Activated T-helper 1 cell treated with anti-CD3 and anti-CD28 coated beads, Interleukin-12 subunit alpha, Interleukin-12 subunit beta, Interleukin-2, Interleukin-4 antibody, amounts not matched to agents 30 ng/mL and 10 ng/mL and 1 ng/mL, durations not matched to agents 14 hours and 24 hours and 36 hours (primary cell): ENCODE measurements at regions of chrX and their contacts with region 1.

Region 1: GRCh38 chrX:24693453-24694202 is at the start of gene POLA1:
- DNase-seq: peak; percentile 74
- H3K4me3 Mint-ChIP-seq: peak within 1 kb of the TSS; percentile 90
- H3K27ac Mint-ChIP-seq: peak within 1 kb of the TSS; percentile 89
- H3K4me1 Mint-ChIP-seq: peaks cover 28% of the 10 kb centered on the region
- H3K27me3 Mint-ChIP-seq: peaks cover 4% of the 10 kb centered on the region
- total RNA-seq, gene POLA1: 38.2 and 38.3 TPM in 2 replicates

Region 2: GRCh38 chrX:24513416-24513815 is 180.2 kb before region 1 on chrX:
- intact Hi-C with region 1: loop called (anchors 5 kb)
- DNase-seq: peak; percentile 30
- H3K4me3 Mint-ChIP-seq: no peak overlapping the region
- H3K27ac Mint-ChIP-seq: peak overlapping the region; percentile 66
- H3K4me1 Mint-ChIP-seq: peaks cover 24% of the 10 kb centered on the region
- H3K27me3 Mint-ChIP-seq: no peaks in the 10 kb centered on the region

Region 3: DNA sequence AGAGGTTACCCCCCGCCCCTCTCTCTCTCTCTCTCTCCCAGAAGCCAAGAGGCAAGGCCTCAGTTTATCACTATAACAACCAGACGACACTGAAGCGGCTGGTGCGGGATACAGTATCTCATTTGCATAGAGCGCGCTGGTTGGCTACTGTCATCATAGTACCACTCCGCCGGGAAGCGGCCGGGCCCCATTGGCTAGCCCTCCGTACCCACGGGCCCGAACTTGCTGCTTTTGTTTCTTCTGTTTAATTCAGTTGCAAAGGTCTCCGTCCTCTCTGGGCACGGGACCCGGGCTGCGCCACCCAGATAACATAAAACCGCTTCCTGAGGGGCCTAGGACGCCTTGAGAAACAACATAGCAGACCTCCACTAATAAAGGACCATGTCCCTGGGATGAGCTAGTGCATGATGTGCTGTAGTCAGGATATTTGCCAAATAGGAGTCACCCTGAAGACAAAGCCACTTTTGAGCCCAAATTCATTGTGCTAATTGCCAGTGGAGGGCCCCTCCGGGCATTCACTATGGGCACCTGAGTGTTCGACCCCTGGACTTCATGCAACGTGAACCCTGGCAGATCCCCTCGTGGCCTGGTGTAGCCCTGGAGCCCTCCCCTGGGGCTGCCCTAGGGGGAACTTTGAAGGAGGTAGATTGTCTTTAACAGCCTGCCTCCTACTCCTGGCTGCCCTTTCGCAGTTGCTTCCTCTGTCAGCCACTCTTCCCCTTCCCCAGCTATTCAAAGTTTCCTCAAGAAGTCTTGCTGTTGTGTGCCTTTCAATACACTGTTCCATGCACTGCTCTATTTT is 46.2 kb before region 1 on chrX and contains the start of gene PCYT1B:
- intact Hi-C with region 1: loop called (anchors 5 kb)
- DNase-seq: peak; percentile 63
- H3K4me3 Mint-ChIP-seq: peak within 1 kb of the TSS; percentile 69
- H3K27ac Mint-ChIP-seq: no peak within 1 kb of the TSS
- H3K4me1 Mint-ChIP-seq: peaks cover 15% of the 10 kb centered on the region
- H3K27me3 Mint-ChIP-seq: peaks cover 22% of the 10 kb centered on the region
- total RNA-seq, gene PCYT1B: 0.10 TPM in 1 of 2 replicates, not detected in the other

Region 4: DNA sequence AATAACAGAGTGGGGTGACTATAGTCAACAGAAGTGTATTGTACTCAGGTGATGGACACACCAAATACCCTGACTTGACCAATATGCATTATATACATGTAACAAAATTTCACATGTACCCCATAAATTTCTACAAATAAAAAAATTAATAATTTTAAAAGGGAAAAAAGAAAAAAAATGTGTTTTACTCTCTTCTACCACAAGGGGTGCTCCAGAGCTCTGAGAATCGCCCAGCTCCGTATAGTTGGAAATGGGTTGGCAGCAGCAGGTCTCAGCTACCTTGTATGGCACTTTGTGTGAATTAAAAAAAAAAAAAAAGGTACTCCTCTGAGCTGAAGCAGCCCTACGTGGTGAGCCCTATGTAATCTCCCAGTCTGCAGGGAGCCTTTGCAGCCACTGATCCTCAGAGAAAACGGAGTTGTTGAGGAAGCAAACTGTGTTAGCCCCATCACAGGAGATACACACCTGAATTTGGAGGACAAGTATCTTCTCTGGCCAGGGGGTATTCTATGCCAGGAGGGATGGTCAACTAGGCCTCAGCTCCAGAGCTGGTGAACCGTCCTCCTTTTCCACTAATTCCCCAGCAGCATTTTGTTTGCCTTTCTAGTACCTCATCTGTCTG is 17.1 kb before region 1 on chrX:
- intact Hi-C with region 1: loop called (anchors 2 kb)
- DNase-seq: no peak
- H3K4me3 Mint-ChIP-seq: no peak overlapping the region
- H3K27ac Mint-ChIP-seq: no peak overlapping the region
- H3K4me1 Mint-ChIP-seq: no peaks in the 10 kb centered on the region
- H3K27me3 Mint-ChIP-seq: peaks cover 2% of the 10 kb centered on the region

Region 5: GRCh38 chrX:24682739-24683432 is 10.7 kb before region 1 on chrX:
- intact Hi-C with region 1: loop called (anchors 1 kb)
- DNase-seq: no peak
- H3K4me3 Mint-ChIP-seq: no peak overlapping the region
- H3K27ac Mint-ChIP-seq: peak overlapping the region; percentile 34
- H3K4me1 Mint-ChIP-seq: peaks cover 9% of the 10 kb centered on the region
- H3K27me3 Mint-ChIP-seq: no peaks in the 10 kb centered on the region